ENCODE measurements at regions of chr1 and their contacts with region 1.

Region 1: GRCh38 chr1:203084588-203085502 is 967 bp downstream of the MYOG start:
- DNase-seq: peak; percentile 47 to 92
- H3K4me3 ChIP-seq: no peak overlapping the region
- H3K27ac ChIP-seq: no peak overlapping the region
- H3K4me1 ChIP-seq: peaks cover 9 to 14% (median 11%) of the 10 kb centered on the region in 4 experiments
- H3K27me3 ChIP-seq: 0 out of 7 replicates have a peak, but pooled peaks cover 0 to 2% (median 0%) of the 10 kb centered on the region in 4 experiments
- CTCF ChIP-seq: peak; percentile 90 to 96 (median 96)
- EP300 ChIP-seq: no peak
- POLR2A ChIP-seq: no peak
- RAD21 ChIP-seq: peak; percentile 68 to 77

Region 2: DNA sequence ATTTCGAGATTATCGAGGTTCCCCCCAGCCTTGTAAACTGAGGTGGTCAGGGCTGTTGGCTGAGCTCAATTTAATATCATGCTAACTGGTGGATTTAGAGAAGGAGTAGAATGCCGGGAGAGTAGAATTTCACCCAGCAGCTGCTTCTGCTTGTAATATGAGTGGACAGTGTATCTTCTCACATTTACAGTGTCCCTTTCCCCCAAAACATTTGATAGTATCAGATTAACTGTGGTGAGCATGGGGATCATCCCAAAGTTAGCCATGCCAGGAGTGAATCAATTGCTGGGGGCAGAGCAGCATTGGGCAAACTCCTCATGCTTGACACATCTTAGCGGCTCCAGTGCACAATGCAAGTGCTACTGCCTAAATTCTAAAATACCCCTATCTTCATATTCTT is 67.8 kb before region 1 on chr1:
- CTCF ChIA-PET with region 1: no interaction called
- POLR2A ChIA-PET with region 1: no interaction called
- DNase-seq: no peak
- H3K4me3 ChIP-seq: no peak overlapping the region
- H3K27ac ChIP-seq: no peak overlapping the region
- H3K4me1 ChIP-seq: no peaks in the 10 kb centered on the region
- H3K27me3 ChIP-seq: no peaks in the 10 kb centered on the region
- CTCF ChIP-seq: no peak
- EP300 ChIP-seq: no peak
- POLR2A ChIP-seq: no peak
- RAD21 ChIP-seq: no peak

Region 3: DNA sequence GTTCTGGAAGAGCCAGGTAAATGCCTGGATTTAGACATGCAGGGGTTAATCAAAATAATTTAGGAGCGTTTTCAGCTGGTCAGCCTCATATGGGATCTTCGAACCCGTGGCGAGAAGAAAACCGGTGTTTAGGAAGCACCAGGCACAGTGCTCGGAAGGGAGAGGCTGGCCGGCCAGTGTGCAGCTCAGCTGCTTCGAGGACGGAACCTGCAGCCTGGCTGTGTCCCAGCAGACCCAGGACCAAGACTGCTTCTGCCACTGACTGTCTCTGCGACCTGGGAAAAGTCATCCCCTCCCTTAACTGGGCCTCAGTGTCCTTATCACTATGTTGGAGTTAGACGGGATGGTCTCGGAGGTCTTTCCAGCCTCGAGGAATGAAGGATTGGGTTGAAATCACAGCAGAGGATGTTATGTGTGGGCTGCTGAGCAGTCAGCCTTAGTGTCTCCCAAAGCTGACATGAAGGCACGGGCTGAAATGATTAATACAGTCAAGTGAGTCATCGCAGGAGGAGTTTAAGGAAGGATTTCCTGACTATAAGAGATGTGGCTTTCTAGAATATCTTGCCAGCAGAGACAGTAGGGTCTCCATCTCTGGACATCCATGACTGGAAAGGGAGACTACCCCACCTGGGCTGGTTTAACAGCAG is 37.7 kb before region 1 on chr1:
- CTCF ChIA-PET with region 1: interaction called, 198 read pairs
- POLR2A ChIA-PET with region 1: interaction called, 6 read pairs
- DNase-seq: no peak
- H3K4me3 ChIP-seq: no peak overlapping the region
- H3K27ac ChIP-seq: no peak overlapping the region
- H3K4me1 ChIP-seq: peaks cover 0 to 20% (median 5%) of the 10 kb centered on the region in 4 experiments; a peak in 6 of 7 replicates
- H3K27me3 ChIP-seq: no peaks in the 10 kb centered on the region
- CTCF ChIP-seq: no peak
- EP300 ChIP-seq: no peak
- POLR2A ChIP-seq: no peak
- RAD21 ChIP-seq: no peak

Region 4: GRCh38 chr1:203101915-203102634 is 17.2 kb after region 1 on chr1:
- CTCF ChIA-PET with region 1: interaction called, 275 read pairs
- POLR2A ChIA-PET with region 1: no interaction called
- DNase-seq: no peak
- H3K4me3 ChIP-seq: no peak overlapping the region
- H3K27ac ChIP-seq: no peak overlapping the region
- H3K4me1 ChIP-seq: no peaks in the 10 kb centered on the region
- H3K27me3 ChIP-seq: peaks cover 0 to 4% (median 0%) of the 10 kb centered on the region in 4 experiments; a peak in 1 of 7 replicates
- CTCF ChIP-seq: no peak
- EP300 ChIP-seq: no peak
- POLR2A ChIP-seq: no peak
- RAD21 ChIP-seq: no peak

Region 5: GRCh38 chr1:203133970-203134725 is 49.3 kb after region 1 on chr1:
- CTCF ChIA-PET with region 1: interaction called, 275 read pairs
- POLR2A ChIA-PET with region 1: no interaction called
- DNase-seq: peak in 1 of 2 experiments; percentile 45
- H3K4me3 ChIP-seq: no peak overlapping the region
- H3K27ac ChIP-seq: no peak overlapping the region
- H3K4me1 ChIP-seq: peaks cover 0 to 12% (median 6%) of the 10 kb centered on the region in 4 experiments; a peak in 4 of 7 replicates
- H3K27me3 ChIP-seq: peaks cover 0 to 4% (median 1%) of the 10 kb centered on the region in 4 experiments; a peak in 3 of 7 replicates
- CTCF ChIP-seq: no peak
- EP300 ChIP-seq: no peak
- POLR2A ChIP-seq: no peak
- RAD21 ChIP-seq: no peak

Region 6: DNA sequence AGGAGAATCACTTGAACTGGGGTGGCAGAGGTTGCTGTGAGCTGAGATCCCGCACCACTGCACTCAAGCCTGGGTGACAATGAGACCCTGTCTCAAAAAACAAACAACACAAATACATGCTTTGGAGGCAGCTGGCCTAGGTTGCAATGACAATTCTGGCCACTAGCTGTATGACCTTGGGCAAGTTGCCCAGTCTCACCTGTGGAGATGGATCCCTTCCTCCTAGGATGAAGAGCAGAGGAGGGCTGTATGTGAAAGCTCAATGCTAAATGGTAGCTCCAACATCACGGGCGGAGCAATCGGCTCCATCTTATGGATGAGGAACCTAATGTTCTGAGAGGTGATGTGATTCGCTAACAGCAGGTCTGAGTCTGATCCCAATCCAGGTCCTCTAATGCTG is 63.3 kb after region 1 on chr1:
- CTCF ChIA-PET with region 1: interaction called, 17 read pairs
- POLR2A ChIA-PET with region 1: no interaction called
- DNase-seq: no peak
- H3K4me3 ChIP-seq: no peak overlapping the region
- H3K27ac ChIP-seq: no peak overlapping the region
- H3K4me1 ChIP-seq: peaks cover 7 to 43% (median 19%) of the 10 kb centered on the region in 4 experiments
- H3K27me3 ChIP-seq: no peaks in the 10 kb centered on the region
- CTCF ChIP-seq: peak; percentile 35 to 63 (median 52); a peak in 3 of 4 replicates
- EP300 ChIP-seq: no peak
- POLR2A ChIP-seq: no peak
- RAD21 ChIP-seq: no peak; a peak in 1 of 4 replicates

Region 7: DNA sequence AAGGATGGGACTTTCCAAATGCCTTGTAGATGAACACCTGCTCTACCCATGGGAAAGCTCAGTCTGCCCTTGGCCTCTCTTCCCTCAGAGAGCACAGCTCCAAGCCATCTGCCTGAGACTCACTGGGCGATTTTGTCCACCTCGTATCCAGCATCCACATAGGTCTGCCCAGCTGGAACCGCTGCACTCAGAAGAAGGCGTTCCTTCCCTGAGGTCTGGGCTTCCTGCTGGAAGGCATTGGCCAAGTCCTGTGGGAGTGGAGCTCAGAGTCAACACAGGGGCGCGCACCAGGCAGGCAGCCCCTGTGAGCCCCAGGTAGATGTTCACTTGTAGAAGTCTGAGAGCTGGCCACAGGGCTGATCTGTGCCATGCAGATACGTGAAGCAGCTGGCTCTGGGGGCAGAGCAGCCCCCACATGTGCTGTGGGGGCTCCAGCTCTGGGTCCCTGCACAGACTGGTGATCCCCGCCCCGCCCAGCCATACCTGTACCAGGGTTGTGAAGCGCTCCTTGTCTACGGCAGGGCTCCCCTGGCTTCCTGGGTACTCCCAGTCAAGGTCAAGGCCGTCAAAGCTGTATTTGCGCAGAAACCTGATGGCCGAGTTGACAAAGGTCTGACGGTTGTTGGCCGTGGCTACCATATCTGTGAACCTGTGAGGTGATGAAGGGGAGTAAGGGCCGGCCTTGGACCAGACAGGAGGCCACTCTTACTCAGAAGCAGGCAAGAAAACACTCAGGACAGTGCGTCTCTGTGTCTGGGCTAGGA is 138.3 kb after region 1 on chr1:
- CTCF ChIA-PET with region 1: interaction called, 96 read pairs
- POLR2A ChIA-PET with region 1: no interaction called
- DNase-seq: no peak
- H3K4me3 ChIP-seq: no peak overlapping the region
- H3K27ac ChIP-seq: no peak overlapping the region
- H3K4me1 ChIP-seq: no peaks in the 10 kb centered on the region
- H3K27me3 ChIP-seq: no peaks in the 10 kb centered on the region; a peak in 1 of 7 replicates
- CTCF ChIP-seq: no peak
- EP300 ChIP-seq: no peak
- POLR2A ChIP-seq: no peak
- RAD21 ChIP-seq: no peak

Measured in H1 (cell line).